Activated naive CD4-positive, alpha-beta T cell treated with anti-CD3 and anti-CD28 coated beads for 36 hours (primary cell): ENCODE measurements at regions of chr19 and their contacts with region 1.

Region 1: DNA sequence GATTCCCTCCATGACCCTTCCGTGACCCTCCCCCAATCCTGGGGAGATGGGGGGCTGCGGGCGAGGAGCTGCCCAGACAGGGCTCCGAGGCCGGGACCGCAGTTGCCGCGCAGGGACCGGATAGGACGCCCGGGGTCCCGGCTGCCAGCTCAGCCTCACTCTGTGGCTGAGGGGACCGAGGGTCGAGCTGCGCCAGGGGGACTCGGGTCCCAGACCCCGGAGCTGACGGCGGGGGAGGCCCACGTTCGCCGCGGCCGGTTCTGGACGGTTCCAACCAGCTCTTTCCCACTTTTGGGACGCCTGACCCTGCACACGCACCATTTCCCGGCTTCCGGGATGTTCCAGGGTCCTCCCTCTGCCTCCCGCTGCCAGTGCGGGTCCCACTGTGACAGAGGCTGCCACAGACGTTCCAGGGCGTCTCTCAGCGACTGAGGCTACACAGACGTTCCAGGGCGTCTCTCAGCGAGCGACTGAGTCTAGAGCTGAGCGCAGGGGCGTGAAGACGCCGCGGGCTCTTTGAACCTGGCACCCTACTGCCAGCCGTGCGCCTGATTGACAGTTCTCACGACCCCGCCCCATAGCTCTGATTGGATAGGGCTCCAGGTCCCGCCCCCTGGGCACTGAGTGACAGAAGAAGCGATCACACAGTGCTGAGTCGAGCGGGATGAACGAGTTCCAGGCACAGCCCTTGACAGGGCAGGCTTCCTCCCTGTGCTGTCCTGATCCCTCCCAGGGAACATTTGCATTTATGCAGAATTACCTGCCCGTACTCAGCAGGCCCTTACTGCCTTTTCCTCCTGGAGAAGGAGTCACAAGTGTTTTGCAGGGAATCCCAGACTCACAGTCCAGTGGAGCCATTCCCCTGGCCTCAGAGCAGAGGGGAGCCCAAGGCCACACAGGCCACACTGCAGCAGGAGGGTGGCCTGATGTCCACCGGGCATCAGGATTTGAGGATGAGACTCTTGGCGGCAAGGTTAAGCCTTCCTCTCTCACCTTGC is at the start of gene ZNF563:
- DNase-seq: peak; percentile 100
- H3K4me3 Mint-ChIP-seq: peak within 1 kb of the TSS; percentile 97
- H3K27ac Mint-ChIP-seq: peak within 1 kb of the TSS; percentile 96
- H3K4me1 Mint-ChIP-seq: peaks cover 36% of the 10 kb centered on the region
- H3K27me3 Mint-ChIP-seq: no peaks in the 10 kb centered on the region
- total RNA-seq, gene ZNF563: 3.0 to 4.1 TPM

Region 2: GRCh38 chr19:12202250-12202649 is 131.2 kb before region 1 on chr19:
- CTCF ChIA-PET with region 1: no interaction called
- intact Hi-C with region 1: loop called (anchors 5 kb)
- DNase-seq: peak; percentile 84
- H3K4me3 Mint-ChIP-seq: no peak overlapping the region
- H3K27ac Mint-ChIP-seq: no peak overlapping the region
- H3K4me1 Mint-ChIP-seq: peaks cover 22% of the 10 kb centered on the region
- H3K27me3 Mint-ChIP-seq: no peaks in the 10 kb centered on the region

Region 3: GRCh38 chr19:12365236-12366162 is 32.0 kb after region 1 on chr19 and contains the start of gene ZNF442:
- CTCF ChIA-PET with region 1: interaction called, 7 read pairs
- intact Hi-C with region 1: loop called (anchors 1 kb)
- DNase-seq: peak; percentile 96
- H3K4me3 Mint-ChIP-seq: peak within 1 kb of the TSS; percentile 85
- H3K27ac Mint-ChIP-seq: peak within 1 kb of the TSS; percentile 41
- H3K4me1 Mint-ChIP-seq: peaks cover 18% of the 10 kb centered on the region
- H3K27me3 Mint-ChIP-seq: no peaks in the 10 kb centered on the region
- total RNA-seq, gene ZNF442: 1.7 to 2.4 TPM

Region 4: DNA sequence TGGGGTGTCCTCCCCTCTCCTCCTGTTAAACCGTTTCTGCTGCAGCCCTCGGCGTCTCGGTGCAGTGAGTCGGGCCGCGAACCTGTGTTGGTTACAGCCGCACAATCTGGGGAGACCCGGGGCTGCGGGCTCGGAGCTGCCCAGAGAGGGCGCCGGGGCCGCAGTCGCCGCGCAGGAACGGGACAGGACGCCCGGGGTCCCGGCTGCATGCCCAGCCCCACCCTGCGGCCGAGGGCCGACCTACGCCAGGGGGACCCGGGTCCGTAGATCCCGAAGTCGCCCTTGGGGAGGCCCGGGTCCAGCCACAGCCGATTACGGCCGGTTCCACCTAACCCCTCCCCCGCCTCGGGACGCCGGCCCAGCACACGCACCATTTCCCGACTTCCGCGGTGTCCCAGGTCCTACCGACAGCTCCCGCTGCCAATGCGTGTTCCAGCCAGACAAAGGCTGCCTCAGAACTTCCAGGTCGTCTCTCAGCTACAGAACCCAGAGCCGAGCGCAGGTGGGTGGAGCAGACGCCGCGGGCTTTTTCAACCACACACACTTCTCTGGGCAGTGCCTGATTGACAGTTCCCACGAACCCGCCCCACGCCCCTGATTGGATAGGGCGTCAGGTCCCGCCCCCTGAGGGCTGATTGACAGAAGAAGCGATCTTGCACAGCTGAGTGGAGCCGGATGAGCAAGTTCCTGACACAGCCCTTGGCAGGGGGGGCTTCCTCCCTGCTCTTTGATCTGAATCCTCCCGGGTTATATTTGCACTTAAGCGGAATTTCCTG is 107.3 kb after region 1 on chr19 and contains the start of gene ZNF443:
- CTCF ChIA-PET with region 1: no interaction called
- intact Hi-C with region 1: loop called (anchors 2 kb)
- DNase-seq: peak; percentile 100
- H3K4me3 Mint-ChIP-seq: peak within 1 kb of the TSS; percentile 100
- H3K27ac Mint-ChIP-seq: peak within 1 kb of the TSS; percentile 96
- H3K4me1 Mint-ChIP-seq: peaks cover 6% of the 10 kb centered on the region
- H3K27me3 Mint-ChIP-seq: no peaks in the 10 kb centered on the region
- total RNA-seq, gene ZNF443: 3.7 to 4.1 TPM

Region 5: GRCh38 chr19:12551060-12551832 is 217.8 kb after region 1 on chr19 and contains the start of gene ZNF564:
- CTCF ChIA-PET with region 1: no interaction called
- intact Hi-C with region 1: loop called (anchors 5 kb)
- DNase-seq: peak; percentile 97
- H3K4me3 Mint-ChIP-seq: peak within 1 kb of the TSS; percentile 99
- H3K27ac Mint-ChIP-seq: peak within 1 kb of the TSS; percentile 96
- H3K4me1 Mint-ChIP-seq: peaks cover 37% of the 10 kb centered on the region
- H3K27me3 Mint-ChIP-seq: no peaks in the 10 kb centered on the region
- total RNA-seq, gene ZNF564: 5.6 to 5.7 TPM